ENCODE measurements at regions of chr7 and their contacts with region 1.

Region 1: GRCh38 chr7:142508258-142508689 is 241.0 kb upstream of the PRSS1 start:
- H3K4me3 Mint-ChIP-seq: no peak overlapping the region
- H3K27ac Mint-ChIP-seq: no peak overlapping the region
- H3K4me1 Mint-ChIP-seq: no peaks in the 10 kb centered on the region
- H3K27me3 Mint-ChIP-seq: peaks cover 1% of the 10 kb centered on the region

Region 2: DNA sequence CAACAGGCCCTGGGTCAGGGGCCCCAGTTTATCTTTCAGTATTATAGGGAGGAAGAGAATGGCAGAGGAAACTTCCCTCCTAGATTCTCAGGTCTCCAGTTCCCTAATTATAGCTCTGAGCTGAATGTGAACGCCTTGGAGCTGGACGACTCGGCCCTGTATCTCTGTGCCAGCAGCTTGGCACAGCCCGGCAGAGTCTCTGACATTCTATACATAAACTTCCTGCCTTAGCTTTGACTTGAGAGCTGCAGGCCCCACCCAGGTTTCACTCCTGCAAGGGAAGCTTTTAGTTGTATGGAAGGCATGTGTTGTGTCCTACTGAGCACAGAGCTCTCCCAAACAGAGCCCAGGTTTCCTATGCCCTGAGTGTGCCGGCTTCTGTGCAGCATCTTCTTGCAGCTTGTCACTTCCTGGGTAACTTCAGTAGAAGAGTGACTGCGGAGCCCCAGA is 44.8 kb before region 1 on chr7:
- intact Hi-C with region 1: loop called (anchors 5 kb)
- H3K4me3 Mint-ChIP-seq: no peak overlapping the region
- H3K27ac Mint-ChIP-seq: peak overlapping the region; percentile 47
- H3K4me1 Mint-ChIP-seq: peaks cover 43% of the 10 kb centered on the region
- H3K27me3 Mint-ChIP-seq: no peaks in the 10 kb centered on the region

Region 3: DNA sequence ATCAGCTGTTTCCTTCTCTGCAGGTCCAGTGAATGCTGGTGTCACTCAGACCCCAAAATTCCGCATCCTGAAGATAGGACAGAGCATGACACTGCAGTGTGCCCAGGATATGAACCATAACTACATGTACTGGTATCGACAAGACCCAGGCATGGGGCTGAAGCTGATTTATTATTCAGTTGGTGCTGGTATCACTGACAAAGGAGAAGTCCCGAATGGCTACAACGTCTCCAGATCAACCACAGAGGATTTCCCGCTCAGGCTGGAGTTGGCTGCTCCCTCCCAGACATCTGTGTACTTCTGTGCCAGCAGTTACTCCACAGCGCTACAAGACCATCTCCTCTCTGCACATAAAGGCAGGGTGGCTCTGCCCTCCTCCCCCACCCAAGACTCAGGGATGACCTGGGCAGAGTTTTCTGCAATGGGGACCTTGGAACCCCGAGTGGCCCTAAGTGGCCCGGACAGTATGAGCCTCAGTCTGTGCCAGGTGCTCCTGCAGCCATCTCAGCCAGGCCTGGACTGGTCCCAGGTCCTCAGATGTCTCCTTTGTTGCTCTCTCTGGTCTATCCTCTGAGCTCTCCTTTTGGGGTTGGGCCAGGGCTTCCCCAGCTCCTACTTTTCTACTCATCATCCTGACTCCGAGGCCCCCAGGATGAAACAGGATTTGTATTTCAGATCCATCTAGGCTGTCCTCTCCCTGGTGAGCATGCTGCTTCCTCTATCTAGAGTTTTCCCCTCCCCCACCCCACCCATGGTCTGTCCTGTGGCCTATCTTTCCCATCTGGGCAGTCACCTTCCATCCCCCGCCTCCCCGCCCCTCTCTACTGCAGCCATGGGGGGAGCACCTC is 38.4 kb before region 1 on chr7:
- intact Hi-C with region 1: loop called (anchors 5 kb)
- H3K4me3 Mint-ChIP-seq: no peak overlapping the region
- H3K27ac Mint-ChIP-seq: no peak overlapping the region
- H3K4me1 Mint-ChIP-seq: peaks cover 63% of the 10 kb centered on the region
- H3K27me3 Mint-ChIP-seq: peaks cover 17% of the 10 kb centered on the region

Region 4: DNA sequence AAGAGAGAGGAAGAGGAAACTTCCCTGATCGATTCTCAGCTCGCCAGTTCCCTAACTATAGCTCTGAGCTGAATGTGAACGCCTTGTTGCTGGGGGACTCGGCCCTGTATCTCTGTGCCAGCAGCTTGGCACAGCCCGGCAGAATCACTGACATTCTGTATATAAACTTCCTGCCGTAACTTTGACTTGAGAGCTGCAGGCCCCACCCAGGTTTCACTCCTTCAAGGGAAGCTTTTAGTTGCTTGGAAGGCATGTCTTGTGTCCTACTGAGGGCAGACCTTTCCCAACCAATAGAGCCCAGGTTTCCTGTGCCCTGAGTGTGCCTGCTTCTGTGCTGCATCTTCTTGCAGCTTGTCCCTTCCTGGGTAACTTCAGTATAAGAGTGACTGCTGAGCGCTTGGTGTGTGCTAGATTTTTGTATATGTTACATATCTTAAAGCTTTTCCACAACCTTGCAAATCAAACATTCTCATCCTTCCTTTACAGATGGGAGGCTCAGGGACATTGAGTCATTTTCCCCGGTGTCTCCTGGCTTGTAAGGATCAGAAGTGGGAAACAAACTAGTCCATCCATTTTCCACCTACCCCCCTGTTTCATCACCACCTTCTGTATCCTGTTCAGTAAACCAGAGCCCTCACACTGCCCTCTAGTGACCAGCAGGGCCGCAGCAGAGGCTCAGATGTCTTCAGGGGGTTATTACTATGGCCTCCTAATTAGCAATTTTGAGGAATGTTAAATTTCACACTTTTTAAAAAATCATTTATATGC is 25.2 kb before region 1 on chr7:
- intact Hi-C with region 1: no loop called
- H3K4me3 Mint-ChIP-seq: no peak overlapping the region
- H3K27ac Mint-ChIP-seq: no peak overlapping the region
- H3K4me1 Mint-ChIP-seq: peaks cover 58% of the 10 kb centered on the region
- H3K27me3 Mint-ChIP-seq: peaks cover 4% of the 10 kb centered on the region

Measured in dendritic cell treated with granulocyte-macrophage colony-stimulating factor and Interleukin-4, amounts not matched to agents 40 ng/mL and 50 ng/mL, for 4 days (primary cell).